A549 (cell line): ENCODE measurements at regions of chr9 and their contacts with region 1.

Region 1: DNA sequence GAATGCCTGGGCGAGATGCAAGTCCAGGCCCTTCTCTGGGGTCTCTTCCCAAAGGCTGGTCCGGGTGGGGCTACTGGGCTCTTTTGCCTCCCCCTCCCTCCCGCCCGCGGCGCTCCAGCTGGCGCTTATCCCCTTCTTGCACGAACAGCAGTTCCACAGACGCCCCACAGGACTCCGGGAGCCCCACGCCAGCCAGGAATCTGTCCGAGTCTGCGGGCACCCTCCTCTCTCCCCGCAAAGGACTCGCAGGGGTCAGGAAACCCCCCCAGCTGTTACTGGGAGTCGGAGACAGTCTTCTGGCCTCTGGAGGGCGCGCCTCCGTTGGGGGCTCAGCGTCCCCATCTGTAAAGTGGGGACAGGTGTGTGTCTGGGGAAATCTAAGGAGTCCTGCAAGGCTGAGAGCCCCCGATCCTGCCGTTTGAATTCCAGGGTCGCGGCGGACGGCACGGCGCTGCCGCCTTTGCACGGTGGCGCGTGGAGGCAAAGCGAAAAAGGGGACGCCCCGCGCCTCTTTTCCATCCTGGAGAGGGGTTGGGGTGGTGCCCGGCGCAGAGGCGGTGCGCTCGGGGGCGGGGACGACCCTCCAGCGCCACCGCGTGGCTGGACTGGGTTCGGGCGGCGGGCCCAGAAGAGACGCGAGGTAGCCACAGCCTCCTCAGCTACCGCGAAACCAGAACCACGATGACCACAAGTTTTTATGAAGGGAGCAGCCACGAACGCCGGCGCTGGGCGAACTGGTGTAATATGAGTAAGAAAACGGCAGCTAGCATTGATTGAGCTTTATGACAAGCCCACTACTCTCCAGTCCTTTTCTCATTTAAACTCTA is 2.9 kb upstream of the CCIN start:
- DNase-seq: peak; percentile 87 to 93
- ATAC-seq: peak; percentile 85 to 93
- H3K4me3 ChIP-seq: peak overlapping the region; percentile 47
- H3K27ac ChIP-seq: peak overlapping the region; percentile 65 to 84; a peak in 5 of 6 replicates
- H3K4me1 ChIP-seq: peaks cover 39% of the 10 kb centered on the region
- CTCF ChIP-seq: peak; percentile 91
- EP300 ChIP-seq: no peak
- POLR2A ChIP-seq: no peak
- RAD21 ChIP-seq: peak; percentile 80 to 97

Region 2: GRCh38 chr9:35954942-35955546 is 211.3 kb before region 1 on chr9:
- CTCF ChIA-PET with region 1: interaction called, 17 read pairs
- POLR2A ChIA-PET with region 1: no interaction called
- DNase-seq: peak; percentile 42 to 81
- ATAC-seq: peak; percentile 87 to 93
- H3K4me3 ChIP-seq: no peak overlapping the region
- H3K27ac ChIP-seq: no peak overlapping the region
- H3K4me1 ChIP-seq: peaks cover 8% of the 10 kb centered on the region; the same call in 1 of the 3 replicates
- CTCF ChIP-seq: peak; percentile 91
- EP300 ChIP-seq: no peak
- POLR2A ChIP-seq: no peak
- RAD21 ChIP-seq: peak; percentile 77 to 87

Region 3: DNA sequence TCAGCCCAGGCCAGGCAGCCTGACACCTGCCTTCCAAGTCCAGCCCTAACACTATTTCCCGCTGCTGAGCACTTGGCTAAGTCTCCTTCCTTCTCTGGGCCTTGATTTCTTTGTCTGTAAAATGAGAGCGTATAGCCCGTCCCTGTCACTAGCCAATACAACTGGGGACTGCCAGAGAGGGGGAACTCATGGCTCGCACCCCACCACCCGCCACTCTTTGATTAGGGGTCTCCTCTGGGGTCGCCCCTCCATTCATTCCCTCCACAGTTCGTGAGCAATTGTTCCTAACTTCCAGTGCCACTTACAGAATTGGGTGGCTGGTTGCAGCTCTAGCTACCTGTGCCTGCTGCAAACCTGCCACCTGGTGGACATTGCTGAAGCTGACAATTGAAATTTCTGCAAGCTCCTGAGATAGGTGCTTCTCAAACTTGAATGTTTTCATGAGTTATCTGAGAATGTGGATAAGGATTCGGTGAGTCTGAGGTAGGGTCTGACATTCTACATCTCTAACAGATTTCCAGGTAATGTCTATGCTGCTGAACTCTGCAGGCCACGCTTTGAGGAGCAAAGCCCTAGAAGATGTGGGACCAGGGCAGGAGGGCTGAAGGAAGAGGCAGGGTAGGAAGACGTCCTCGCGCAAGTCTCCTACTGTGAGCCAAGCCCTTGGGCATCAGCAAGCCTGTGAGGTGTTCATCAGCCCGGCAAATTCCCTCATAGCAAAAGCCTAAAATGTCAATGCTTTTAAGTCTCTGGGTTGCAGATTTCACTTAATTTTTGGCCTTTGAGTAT is 142.9 kb before region 1 on chr9:
- CTCF ChIA-PET with region 1: interaction called, 14 read pairs
- POLR2A ChIA-PET with region 1: no interaction called
- DNase-seq: peak; percentile 60 to 74
- ATAC-seq: peak; percentile 86 to 97
- H3K4me3 ChIP-seq: no peak overlapping the region
- H3K27ac ChIP-seq: no peak overlapping the region
- H3K4me1 ChIP-seq: no peaks in the 10 kb centered on the region
- CTCF ChIP-seq: peak; percentile 93
- EP300 ChIP-seq: no peak
- POLR2A ChIP-seq: no peak
- RAD21 ChIP-seq: peak; percentile 82 to 86

Region 4: DNA sequence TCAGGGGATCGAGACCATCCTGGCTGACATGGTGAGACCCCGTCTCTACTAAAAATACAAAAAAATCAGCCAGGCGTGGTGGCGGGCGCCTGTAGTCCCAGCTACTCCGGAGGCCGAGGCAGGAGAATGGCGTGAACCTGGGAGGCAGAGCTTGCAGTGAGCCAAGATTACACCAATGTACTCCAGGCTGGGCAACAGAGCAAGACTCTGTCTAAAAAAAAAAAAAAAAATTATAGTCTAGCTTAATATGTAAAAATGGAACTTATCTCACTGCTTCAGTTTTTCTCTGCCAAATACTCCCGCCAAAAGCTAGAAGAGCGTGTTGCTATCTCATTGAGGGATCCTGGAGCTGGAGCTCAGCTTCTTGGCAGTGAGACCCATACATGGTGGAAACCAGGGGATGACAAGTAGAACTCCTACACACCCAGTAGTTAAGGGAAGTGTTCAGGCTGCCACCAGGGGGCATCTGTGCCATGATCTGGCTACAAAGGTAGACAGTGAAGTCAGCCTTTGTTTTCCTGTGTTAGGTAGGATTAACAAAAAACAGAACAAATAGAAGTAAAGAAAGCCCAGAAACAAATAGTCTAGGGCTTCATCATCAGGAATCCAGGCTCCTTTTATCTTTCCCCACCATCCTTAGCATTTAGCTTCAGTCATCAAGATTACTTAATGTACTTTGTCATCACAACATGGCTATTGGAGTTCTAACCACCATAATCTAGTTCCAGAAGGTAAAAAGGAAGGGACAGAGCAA is 63.4 kb before region 1 on chr9:
- CTCF ChIA-PET with region 1: interaction called, 321 read pairs
- POLR2A ChIA-PET with region 1: interaction called, 6 read pairs
- DNase-seq: peak; percentile 74 to 86
- ATAC-seq: peak; percentile 90 to 91
- H3K4me3 ChIP-seq: no peak overlapping the region
- H3K27ac ChIP-seq: peak overlapping the region; percentile 26 to 77
- H3K4me1 ChIP-seq: peaks cover 26% of the 10 kb centered on the region
- CTCF ChIP-seq: peak; percentile 71
- EP300 ChIP-seq: no peak
- POLR2A ChIP-seq: no peak
- RAD21 ChIP-seq: peak; percentile 64 to 84; a peak in 4 of 5 replicates

Region 5: DNA sequence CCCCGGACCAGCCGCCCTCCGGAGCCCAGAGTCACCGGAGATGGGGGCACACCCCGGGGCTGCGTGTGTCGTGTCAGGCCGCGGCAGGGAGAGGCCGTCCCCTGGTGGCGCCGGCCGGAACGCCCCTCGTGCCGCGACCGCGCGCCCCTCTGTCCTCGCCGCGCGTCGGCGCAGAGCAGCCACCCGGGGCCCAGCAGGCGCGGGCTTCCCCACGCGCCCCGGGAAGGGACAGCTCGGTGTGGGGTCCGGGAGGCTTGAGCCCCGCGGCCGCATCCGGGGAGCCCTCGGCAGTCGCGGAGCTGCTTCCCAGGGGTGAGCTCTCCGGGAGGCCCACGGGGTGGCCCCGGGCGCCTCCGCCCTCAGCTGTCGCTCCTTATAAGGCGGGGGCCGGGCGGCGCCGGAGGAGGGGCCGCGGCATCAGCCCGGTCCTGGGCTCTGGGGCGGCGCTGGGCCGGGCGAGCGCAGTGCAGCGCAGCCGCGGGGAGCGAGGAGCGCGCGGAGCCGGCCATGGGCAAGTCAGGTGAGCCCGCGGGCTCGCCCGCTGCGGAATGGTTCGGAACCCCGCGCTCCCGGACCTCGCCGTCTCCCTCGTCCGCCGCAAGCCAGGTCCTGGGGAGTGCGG is 29.9 kb before region 1 on chr9 and contains the start of gene GLIPR2:
- CTCF ChIA-PET with region 1: interaction called, 176 read pairs
- POLR2A ChIA-PET with region 1: interaction called, 5 read pairs
- DNase-seq: peak; percentile 49 to 77
- ATAC-seq: peak; percentile 87 to 94
- H3K4me3 ChIP-seq: peak within 1 kb of the TSS; percentile 78
- H3K27ac ChIP-seq: peak within 1 kb of the TSS; percentile 79 to 93
- H3K4me1 ChIP-seq: peaks cover 14% of the 10 kb centered on the region; the same call in 1 of the 3 replicates
- CTCF ChIP-seq: no peak; the same call in 2 of the 3 replicates
- EP300 ChIP-seq: no peak
- POLR2A ChIP-seq: peak; percentile 53
- RAD21 ChIP-seq: peak in 1 of 2 experiments; percentile 5; a peak in 1 of 5 replicates
- polyA plus RNA-seq, gene GLIPR2: 6.2 and 9.0 TPM in 2 replicates

Region 6: DNA sequence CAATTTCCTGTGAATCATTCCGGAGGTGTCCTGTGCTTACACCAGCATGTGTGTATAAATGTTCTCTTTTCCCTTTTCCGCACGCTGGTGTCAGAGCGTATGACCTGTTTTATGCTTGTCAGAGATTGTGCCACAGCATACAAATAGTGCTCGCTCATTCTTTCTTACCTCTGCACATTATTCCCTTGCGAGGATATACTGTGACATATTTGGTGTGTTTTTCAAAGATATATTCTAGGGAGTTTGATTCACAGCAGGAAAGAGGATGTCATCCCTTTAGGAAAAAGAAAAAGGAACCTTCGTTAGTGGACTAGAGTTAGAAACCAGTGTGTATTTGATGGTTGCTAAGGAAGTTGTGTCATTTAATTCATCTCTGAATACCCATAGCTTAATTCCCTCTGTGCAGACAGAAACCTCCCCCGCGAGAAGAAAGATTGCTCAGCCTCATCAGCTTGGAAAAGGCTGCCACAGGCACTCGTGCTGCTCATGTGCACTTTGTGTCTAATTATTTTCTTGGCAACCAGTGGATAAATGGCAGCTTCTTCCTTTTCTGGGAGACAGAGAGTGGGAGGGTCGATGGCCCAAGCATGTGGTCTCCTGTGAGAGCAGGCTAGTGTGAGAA is 11.9 kb before region 1 on chr9:
- CTCF ChIA-PET with region 1: interaction called, 45 read pairs
- POLR2A ChIA-PET with region 1: interaction called, 19 read pairs
- DNase-seq: peak in 1 of 2 experiments; percentile 66
- ATAC-seq: peak; percentile 62 to 72
- H3K4me3 ChIP-seq: no peak overlapping the region
- H3K27ac ChIP-seq: peak overlapping the region in 1 of 2 experiments; percentile 70; a peak in 3 of 6 replicates
- H3K4me1 ChIP-seq: peaks cover 19% of the 10 kb centered on the region
- CTCF ChIP-seq: no peak
- EP300 ChIP-seq: no peak
- POLR2A ChIP-seq: no peak
- RAD21 ChIP-seq: no peak

Region 7: DNA sequence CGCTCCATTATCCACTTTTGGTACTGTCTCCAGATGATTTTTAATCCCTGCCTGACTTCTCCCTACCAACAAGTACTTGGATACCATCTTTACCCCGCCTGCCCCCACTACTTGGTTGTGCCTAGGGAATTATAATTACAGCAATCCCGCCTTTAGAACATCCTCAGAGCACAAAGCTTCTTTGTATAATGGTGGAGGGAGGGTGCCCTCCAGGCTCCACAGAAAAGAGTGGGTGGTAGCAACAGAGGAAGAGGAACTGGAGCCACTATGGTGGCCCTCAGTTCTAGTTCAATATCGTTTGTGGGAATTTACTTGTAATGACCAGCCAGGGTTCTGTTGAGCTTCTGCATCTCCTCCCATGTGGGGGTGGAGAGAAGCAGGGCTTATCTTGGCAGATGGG is 312.8 kb after region 1 on chr9:
- CTCF ChIA-PET with region 1: no interaction called
- POLR2A ChIA-PET with region 1: no interaction called
- DNase-seq: no peak
- ATAC-seq: no peak
- H3K4me3 ChIP-seq: no peak overlapping the region
- H3K27ac ChIP-seq: no peak overlapping the region
- H3K4me1 ChIP-seq: no peaks in the 10 kb centered on the region
- CTCF ChIP-seq: no peak
- EP300 ChIP-seq: no peak
- POLR2A ChIP-seq: no peak
- RAD21 ChIP-seq: no peak